K562 (cell line): ENCODE measurements at regions of chr11 and their contacts with region 1.

Region 1: DNA sequence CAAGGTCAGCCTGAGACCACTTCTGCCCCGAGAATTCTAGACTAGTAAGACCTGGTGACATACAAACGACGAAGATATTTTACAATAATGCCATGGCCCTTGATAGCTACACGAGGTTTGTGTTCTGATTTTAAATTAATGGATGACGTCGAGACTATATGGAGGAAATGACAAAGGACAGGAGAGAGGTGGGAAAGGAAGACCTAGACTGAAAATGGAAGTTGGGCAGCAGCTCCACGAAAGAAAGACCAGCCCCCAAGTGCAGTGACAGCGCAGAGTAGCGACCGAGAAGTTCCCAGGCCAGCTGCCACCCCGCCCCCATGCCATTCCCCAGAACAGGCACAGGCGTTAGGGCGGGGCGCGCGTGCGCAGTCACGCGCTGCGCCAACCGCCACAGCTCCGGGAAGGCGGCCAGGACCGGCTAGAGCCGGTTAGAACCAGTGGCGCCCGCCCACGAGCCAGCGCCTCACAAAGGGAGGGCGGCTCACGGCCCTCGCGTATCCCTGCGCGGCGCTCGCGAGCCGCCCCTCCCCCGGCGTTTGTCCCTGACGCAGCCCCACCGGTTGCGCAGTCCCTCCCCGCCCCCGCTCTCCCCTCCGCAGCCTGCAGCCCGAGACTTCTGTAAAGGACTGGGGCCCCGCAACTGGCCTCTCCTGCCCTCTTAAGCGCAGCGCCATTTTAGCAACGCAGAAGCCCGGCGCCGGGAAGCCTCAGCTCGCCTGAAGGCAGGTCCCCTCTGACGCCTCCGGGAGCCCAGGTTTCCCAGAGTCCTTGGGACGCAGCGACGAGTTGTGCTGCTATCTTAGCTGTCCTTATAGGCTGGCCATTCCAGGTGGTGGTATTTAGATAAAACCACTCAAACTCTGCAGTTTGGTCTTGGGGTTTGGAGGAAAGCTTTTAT is 1.5 kb upstream of the MALAT1 start:
- DNase-seq: peak; percentile 86 to 100 (median 90)
- ATAC-seq: peak; percentile 76
- H3K4me3 ChIP-seq: peak overlapping the region; percentile 84
- H3K27ac ChIP-seq: peak overlapping the region; percentile 99
- H3K4me1 ChIP-seq: peaks cover 36 to 38% of the 10 kb centered on the region in 2 experiments
- H3K27me3 ChIP-seq: no peaks in the 10 kb centered on the region
- CTCF ChIP-seq: peak in 1 of 3 experiments; percentile 5; a peak in 1 of 6 replicates
- EP300 ChIP-seq: peak; percentile 99
- POLR2A ChIP-seq: peak; percentile 82
- RAD21 ChIP-seq: peak in 1 of 2 experiments; percentile 47

Region 2: GRCh38 chr11:65261591-65262380 is 235.6 kb before region 1 on chr11 and contains the start of gene POLA2:
- CTCF ChIA-PET with region 1: no interaction called
- POLR2A ChIA-PET with region 1: interaction called, 30 read pairs
- in situ Hi-C with region 1: no loop called
- intact Hi-C with region 1: no loop called
- DNase-seq: peak; percentile 98 to 100 (median 100)
- ATAC-seq: peak; percentile 92
- H3K4me3 ChIP-seq: peak within 1 kb of the TSS; percentile 65
- H3K27ac ChIP-seq: peak within 1 kb of the TSS; percentile 83
- H3K4me1 ChIP-seq: peaks cover 9 to 23% of the 10 kb centered on the region in 2 experiments; a peak in 4 of 5 replicates
- H3K27me3 ChIP-seq: no peaks in the 10 kb centered on the region
- CTCF ChIP-seq: no peak
- EP300 ChIP-seq: no peak
- POLR2A ChIP-seq: peak; percentile 96
- RAD21 ChIP-seq: no peak
- polyA plus RNA-seq, gene POLA2: 2.7 to 5.6 TPM

Region 3: DNA sequence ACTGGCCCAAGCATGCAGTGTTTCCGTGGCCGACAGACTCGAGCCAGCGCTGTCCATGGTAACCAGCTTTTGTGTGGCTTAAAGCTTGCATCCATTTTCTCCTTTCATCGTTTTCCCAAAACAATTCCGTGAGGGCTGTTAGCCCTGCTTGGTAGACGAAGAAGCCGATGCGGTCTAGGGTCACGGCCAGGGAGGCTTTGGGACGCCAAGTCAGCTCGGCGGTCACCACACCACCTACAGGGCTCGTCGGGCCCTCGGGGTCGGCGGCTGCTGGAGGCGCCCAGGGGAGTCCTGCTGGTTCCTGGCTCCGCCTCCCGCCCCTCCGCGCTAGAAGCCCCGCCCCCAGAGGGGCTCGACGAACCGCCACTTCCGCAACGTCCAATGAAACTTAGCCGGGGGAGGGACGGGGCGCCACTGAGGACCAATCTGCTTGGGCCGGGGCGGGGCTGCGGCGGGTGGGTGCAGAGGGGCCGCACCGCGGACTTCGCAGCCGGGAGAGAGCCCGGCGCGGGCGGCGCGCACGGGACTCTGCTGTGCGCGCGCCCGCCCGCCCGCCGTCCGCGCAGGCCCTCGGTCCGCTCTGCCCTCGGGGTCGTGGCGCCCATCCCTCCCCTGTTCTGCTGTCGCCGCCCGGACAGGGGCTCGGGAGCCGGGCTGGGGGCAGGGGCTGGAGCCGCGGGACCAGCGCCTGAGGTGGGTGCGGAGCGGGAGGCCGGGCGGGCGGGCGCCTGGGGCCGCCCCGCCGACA is 143.0 kb before region 1 on chr11 and contains the start of gene TIGD3:
- CTCF ChIA-PET with region 1: no interaction called
- POLR2A ChIA-PET with region 1: interaction called, 253 read pairs
- in situ Hi-C with region 1: no loop called
- intact Hi-C with region 1: no loop called
- DNase-seq: peak; percentile 98 to 99 (median 99)
- ATAC-seq: peak; percentile 95
- H3K4me3 ChIP-seq: peak within 1 kb of the TSS; percentile 63
- H3K27ac ChIP-seq: peak within 1 kb of the TSS; percentile 66
- H3K4me1 ChIP-seq: peaks cover 25 to 48% of the 10 kb centered on the region in 2 experiments
- H3K27me3 ChIP-seq: no peaks in the 10 kb centered on the region
- CTCF ChIP-seq: 0 out of 6 replicates have a peak, but pooled peaks of 1 of the 3 experiments have one; percentile 2
- EP300 ChIP-seq: no peak
- POLR2A ChIP-seq: peak; percentile 42; the same call in 1 of the 2 replicates
- RAD21 ChIP-seq: no peak
- polyA plus RNA-seq, gene TIGD3: 0.06 to 0.08 TPM

Region 4: GRCh38 chr11:65398362-65398910 is 99.0 kb before region 1 on chr11:
- CTCF ChIA-PET with region 1: no interaction called
- POLR2A ChIA-PET with region 1: interaction called, 30 read pairs
- in situ Hi-C with region 1: no loop called
- intact Hi-C with region 1: no loop called
- DNase-seq: no peak
- ATAC-seq: peak; percentile 23; the same call in 2 of the 3 replicates
- H3K4me3 ChIP-seq: no peak overlapping the region
- H3K27ac ChIP-seq: no peak overlapping the region
- H3K4me1 ChIP-seq: peaks cover 2 to 52% of the 10 kb centered on the region in 2 experiments; a peak in 4 of 5 replicates
- H3K27me3 ChIP-seq: no peaks in the 10 kb centered on the region
- CTCF ChIP-seq: peak in 2 of 3 experiments; percentile 23 to 39; a peak in 3 of 6 replicates
- EP300 ChIP-seq: no peak
- POLR2A ChIP-seq: no peak
- RAD21 ChIP-seq: no peak

Region 5: DNA sequence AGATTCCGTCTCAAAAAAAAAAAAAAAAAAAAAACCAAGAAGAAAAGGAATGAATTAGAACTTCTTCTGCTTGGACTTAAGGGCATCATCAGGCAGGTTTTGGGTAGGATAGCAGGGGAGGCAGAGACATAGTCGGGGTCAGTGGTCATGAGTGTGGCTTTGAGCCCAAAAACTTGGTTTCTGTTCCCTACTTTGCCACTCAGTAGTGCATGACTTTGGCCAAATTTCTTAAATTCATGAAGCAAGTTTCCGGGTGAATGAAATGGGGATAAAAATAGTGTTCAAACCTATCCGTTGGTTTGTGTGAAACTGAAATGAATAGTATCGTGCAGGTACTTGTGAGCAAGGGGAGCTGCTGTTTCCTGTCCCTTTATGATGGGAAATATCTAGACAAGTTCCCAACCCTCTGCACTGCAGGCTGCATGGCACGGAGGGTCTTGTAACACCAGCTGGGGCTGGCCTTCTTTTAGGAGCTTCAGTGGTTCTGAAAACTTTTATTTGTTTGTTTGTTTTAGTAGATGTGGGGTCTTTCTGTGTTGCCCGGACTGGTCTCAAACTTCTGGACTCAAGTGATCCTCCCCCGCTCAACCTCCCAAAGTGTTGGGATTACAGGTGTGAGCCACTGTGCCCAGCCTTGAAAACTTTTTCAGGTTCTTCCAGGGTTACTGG is 56.4 kb before region 1 on chr11:
- CTCF ChIA-PET with region 1: no interaction called
- POLR2A ChIA-PET with region 1: interaction called, 309 read pairs
- in situ Hi-C with region 1: no loop called
- intact Hi-C with region 1: no loop called
- DNase-seq: peak in 1 of 4 experiments; percentile 20
- ATAC-seq: no peak
- H3K4me3 ChIP-seq: no peak overlapping the region
- H3K27ac ChIP-seq: no peak overlapping the region
- H3K4me1 ChIP-seq: peaks cover 12 to 45% of the 10 kb centered on the region in 2 experiments; a peak in 4 of 5 replicates
- H3K27me3 ChIP-seq: no peaks in the 10 kb centered on the region
- CTCF ChIP-seq: no peak
- EP300 ChIP-seq: no peak
- POLR2A ChIP-seq: peak; percentile 61
- RAD21 ChIP-seq: no peak

Region 6: GRCh38 chr11:65524741-65525545 is 27.6 kb after region 1 on chr11 and contains the start of gene SCYL1:
- CTCF ChIA-PET with region 1: no interaction called
- POLR2A ChIA-PET with region 1: interaction called, 47 read pairs
- in situ Hi-C with region 1: no loop called
- intact Hi-C with region 1: no loop called
- DNase-seq: peak; percentile 74 to 96 (median 95)
- ATAC-seq: peak; percentile 87
- H3K4me3 ChIP-seq: peak within 1 kb of the TSS; percentile 100
- H3K27ac ChIP-seq: peak within 1 kb of the TSS; percentile 90
- H3K4me1 ChIP-seq: peaks cover 38 to 48% of the 10 kb centered on the region in 2 experiments
- H3K27me3 ChIP-seq: no peaks in the 10 kb centered on the region
- CTCF ChIP-seq: no peak
- EP300 ChIP-seq: no peak
- POLR2A ChIP-seq: peak; percentile 67
- RAD21 ChIP-seq: no peak
- polyA plus RNA-seq, gene SCYL1: 1.9 to 4.7 TPM

Region 7: GRCh38 chr11:65569973-65570918 is 72.9 kb after region 1 on chr11 and contains the start of gene ZNRD2:
- CTCF ChIA-PET with region 1: no interaction called
- POLR2A ChIA-PET with region 1: interaction called, 35 read pairs
- in situ Hi-C with region 1: no loop called
- intact Hi-C with region 1: no loop called
- DNase-seq: peak; percentile 88 to 99 (median 92)
- ATAC-seq: peak; percentile 82
- H3K4me3 ChIP-seq: peak within 1 kb of the TSS; percentile 65
- H3K27ac ChIP-seq: peak within 1 kb of the TSS; percentile 68
- H3K4me1 ChIP-seq: peaks cover 39 to 63% of the 10 kb centered on the region in 2 experiments
- H3K27me3 ChIP-seq: no peaks in the 10 kb centered on the region
- CTCF ChIP-seq: peak; percentile 77 to 86 (median 81)
- EP300 ChIP-seq: no peak
- POLR2A ChIP-seq: peak; percentile 85
- RAD21 ChIP-seq: peak; percentile 51 to 75
- polyA plus RNA-seq, gene ZNRD2: 35.6 to 66.3 TPM